Activated naive CD4-positive, alpha-beta T cell treated with anti-CD3 and anti-CD28 coated beads for 36 hours (primary cell): ENCODE measurements at regions of chr19 and their contacts with region 1.

Region 1: DNA sequence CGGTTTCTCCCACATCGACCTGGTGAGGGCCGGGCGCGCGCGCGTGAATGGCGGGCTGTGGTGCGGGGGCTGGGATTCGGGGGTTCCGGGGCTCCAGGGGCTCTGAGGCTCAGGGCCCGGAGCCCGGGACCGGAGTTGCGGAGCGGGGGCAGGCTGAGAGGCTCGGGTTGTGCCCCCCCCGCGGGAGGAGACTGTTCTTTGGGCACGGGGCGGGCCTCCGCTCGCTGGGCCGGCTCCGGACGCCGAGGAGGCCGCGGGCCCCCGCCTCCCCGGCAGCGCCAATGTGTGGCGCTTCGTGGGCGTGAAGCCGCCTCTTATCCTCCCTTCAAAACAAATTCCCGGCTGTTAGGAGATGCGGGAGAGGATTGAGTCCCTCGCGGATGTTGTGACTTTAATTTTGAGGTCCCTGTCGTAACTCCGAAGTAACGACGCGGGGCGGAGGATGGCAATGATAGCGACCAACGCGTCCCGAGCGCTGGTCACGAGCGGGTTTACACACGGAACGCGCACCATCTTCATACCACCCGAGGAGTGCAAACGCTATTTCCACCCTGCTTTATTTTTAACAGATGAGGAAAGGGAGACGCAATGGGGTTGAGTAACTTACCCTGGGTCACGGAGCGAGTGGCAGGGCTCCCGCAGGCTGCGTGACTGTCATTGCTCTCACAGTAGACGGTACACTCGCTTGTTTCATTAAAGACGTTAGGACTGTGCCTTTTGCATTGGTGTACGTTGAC is 536 bp downstream of the UBA2 start:
- DNase-seq: peak; percentile 56
- H3K4me3 Mint-ChIP-seq: peak overlapping the region; percentile 97
- H3K27ac Mint-ChIP-seq: peak overlapping the region; percentile 94
- H3K4me1 Mint-ChIP-seq: peaks cover 35% of the 10 kb centered on the region
- H3K27me3 Mint-ChIP-seq: no peaks in the 10 kb centered on the region

Region 2: GRCh38 chr19:34171877-34172660 is 256.6 kb before region 1 on chr19 and contains the start of gene LSM14A:
- CTCF ChIA-PET with region 1: no interaction called
- intact Hi-C with region 1: loop called (anchors 2 kb)
- DNase-seq: peak; percentile 90
- H3K4me3 Mint-ChIP-seq: peak within 1 kb of the TSS; percentile 96
- H3K27ac Mint-ChIP-seq: peak within 1 kb of the TSS; percentile 99
- H3K4me1 Mint-ChIP-seq: peaks cover 38% of the 10 kb centered on the region
- H3K27me3 Mint-ChIP-seq: no peaks in the 10 kb centered on the region
- total RNA-seq, gene LSM14A: 87.9 to 102 TPM

Region 3: GRCh38 chr19:34323433-34324204 is 105.1 kb before region 1 on chr19:
- CTCF ChIA-PET with region 1: no interaction called
- intact Hi-C with region 1: no loop called
- DNase-seq: no peak
- H3K4me3 Mint-ChIP-seq: no peak overlapping the region
- H3K27ac Mint-ChIP-seq: no peak overlapping the region
- H3K4me1 Mint-ChIP-seq: peaks cover 11% of the 10 kb centered on the region
- H3K27me3 Mint-ChIP-seq: no peaks in the 10 kb centered on the region

Region 4: DNA sequence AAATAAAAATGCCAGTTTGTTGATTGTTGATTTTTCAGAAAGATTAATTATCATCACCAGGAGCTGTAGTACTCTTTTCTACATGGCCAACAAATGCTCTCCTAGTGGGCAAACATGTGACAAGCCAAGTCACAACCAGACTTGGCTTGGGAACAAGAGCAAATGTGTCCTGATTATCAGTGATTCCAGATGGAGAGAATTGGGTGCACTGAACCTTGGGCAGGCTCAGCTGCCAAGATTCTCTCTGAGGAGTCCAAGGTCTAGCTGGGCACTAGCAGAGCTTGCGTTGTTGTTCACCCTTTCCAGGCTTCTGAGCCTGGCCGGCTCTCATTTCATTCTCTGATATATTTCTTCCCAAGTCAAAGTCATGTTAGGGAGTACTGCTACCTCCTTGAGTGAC is 91.0 kb before region 1 on chr19:
- CTCF ChIA-PET with region 1: no interaction called
- intact Hi-C with region 1: no loop called
- DNase-seq: no peak
- H3K4me3 Mint-ChIP-seq: no peak overlapping the region
- H3K27ac Mint-ChIP-seq: no peak overlapping the region
- H3K4me1 Mint-ChIP-seq: peaks cover 9% of the 10 kb centered on the region
- H3K27me3 Mint-ChIP-seq: no peaks in the 10 kb centered on the region

Region 5: GRCh38 chr19:34359140-34359953 is 69.4 kb before region 1 on chr19:
- CTCF ChIA-PET with region 1: interaction called, 3 read pairs
- intact Hi-C with region 1: loop called (anchors 1 kb)
- DNase-seq: peak; percentile 96
- H3K4me3 Mint-ChIP-seq: peak overlapping the region; percentile 80
- H3K27ac Mint-ChIP-seq: peak overlapping the region; percentile 93
- H3K4me1 Mint-ChIP-seq: peaks cover 35% of the 10 kb centered on the region
- H3K27me3 Mint-ChIP-seq: no peaks in the 10 kb centered on the region

Region 6: DNA sequence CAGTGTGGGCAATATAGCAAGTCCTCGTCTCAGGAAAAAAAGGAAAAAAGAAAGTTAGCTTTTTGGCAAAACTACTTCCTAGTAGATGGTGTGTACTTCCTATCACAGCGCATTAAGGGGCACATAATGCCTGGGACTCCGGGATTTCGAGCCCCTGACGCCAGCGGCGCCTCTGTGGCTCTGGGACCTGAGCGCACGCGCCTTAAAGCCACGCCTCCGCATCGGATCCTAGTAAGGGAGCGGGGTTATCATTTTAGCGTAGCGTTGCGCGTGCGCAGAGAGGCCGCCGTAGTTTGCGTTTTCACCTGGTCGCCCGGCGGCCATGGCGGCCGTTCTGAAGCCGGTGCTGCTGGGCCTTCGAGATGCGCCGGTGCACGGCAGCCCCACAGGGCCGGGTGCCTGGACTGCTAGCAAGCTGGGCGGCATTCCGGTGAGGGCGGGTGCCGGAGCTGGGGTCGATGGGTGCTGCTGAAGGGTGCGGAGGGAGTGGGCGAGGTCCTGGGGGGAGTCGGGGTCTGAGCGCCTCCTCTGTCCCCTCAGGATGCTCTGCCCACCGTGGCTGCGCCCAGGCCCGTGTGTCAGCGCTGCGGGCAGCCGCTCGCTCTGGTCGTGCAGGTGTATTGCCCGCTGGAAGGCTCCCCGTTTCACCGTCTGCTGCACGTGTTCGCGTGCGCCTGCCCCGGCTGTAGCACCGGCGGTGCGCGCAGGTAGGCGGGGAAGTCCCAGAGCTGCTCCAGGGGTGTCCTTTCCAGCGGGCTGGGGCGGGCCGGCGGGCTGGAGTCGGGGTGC is 24.4 kb before region 1 on chr19 and contains the start of gene PDCD2L:
- CTCF ChIA-PET with region 1: interaction called, 3 read pairs
- intact Hi-C with region 1: loop called (anchors 1 kb)
- DNase-seq: peak; percentile 96
- H3K4me3 Mint-ChIP-seq: peak within 1 kb of the TSS; percentile 87
- H3K27ac Mint-ChIP-seq: peak within 1 kb of the TSS; percentile 71
- H3K4me1 Mint-ChIP-seq: peaks cover 24% of the 10 kb centered on the region
- H3K27me3 Mint-ChIP-seq: no peaks in the 10 kb centered on the region
- total RNA-seq, gene PDCD2L: 24.8 to 34.1 TPM

Region 7: GRCh38 chr19:34501339-34502320 is 72.9 kb after region 1 on chr19:
- CTCF ChIA-PET with region 1: interaction called, 3 read pairs
- intact Hi-C with region 1: loop called (anchors 1 kb)
- DNase-seq: peak; percentile 94
- H3K4me3 Mint-ChIP-seq: no peak overlapping the region
- H3K27ac Mint-ChIP-seq: no peak overlapping the region
- H3K4me1 Mint-ChIP-seq: peaks cover 9% of the 10 kb centered on the region
- H3K27me3 Mint-ChIP-seq: peaks cover 20% of the 10 kb centered on the region